ENCODE measurements at regions of chr5 and their contacts with region 1.

Region 1: GRCh38 chr5:91383027-91383955 is at the start of gene ARRDC3:
- DNase-seq: peak; percentile 97 to 98
- H3K4me3 ChIP-seq: peak within 1 kb of the TSS; percentile 65
- H3K4me3 Mint-ChIP-seq: peak within 1 kb of the TSS; percentile 88
- H3K27ac Mint-ChIP-seq: peak within 1 kb of the TSS; percentile 94
- H3K4me1 ChIP-seq: peaks cover 11% of the 10 kb centered on the region
- H3K4me1 Mint-ChIP-seq: no peaks in the 10 kb centered on the region
- H3K27me3 ChIP-seq: no peaks in the 10 kb centered on the region
- H3K27me3 Mint-ChIP-seq: no peaks in the 10 kb centered on the region
- CTCF ChIP-seq: peak in 1 of 2 experiments; percentile 12
- total RNA-seq, gene ARRDC3: 34.5 and 38.7 TPM in 2 replicates

Region 2: GRCh38 chr5:90866333-90866732 is 517.0 kb before region 1 on chr5:
- CTCF ChIA-PET with region 1: interaction called, 10 read pairs
- POLR2A ChIA-PET with region 1: interaction called, 3 read pairs
- intact Hi-C with region 1: loop called (anchors 1 kb)
- DNase-seq: no peak
- H3K4me3 ChIP-seq: no peak overlapping the region
- H3K4me3 Mint-ChIP-seq: no peak overlapping the region
- H3K27ac Mint-ChIP-seq: no peak overlapping the region
- H3K4me1 ChIP-seq: peaks cover 25% of the 10 kb centered on the region
- H3K4me1 Mint-ChIP-seq: peaks cover 14% of the 10 kb centered on the region
- H3K27me3 ChIP-seq: no peaks in the 10 kb centered on the region
- H3K27me3 Mint-ChIP-seq: no peaks in the 10 kb centered on the region
- CTCF ChIP-seq: peak; percentile 34 to 42

Region 3: DNA sequence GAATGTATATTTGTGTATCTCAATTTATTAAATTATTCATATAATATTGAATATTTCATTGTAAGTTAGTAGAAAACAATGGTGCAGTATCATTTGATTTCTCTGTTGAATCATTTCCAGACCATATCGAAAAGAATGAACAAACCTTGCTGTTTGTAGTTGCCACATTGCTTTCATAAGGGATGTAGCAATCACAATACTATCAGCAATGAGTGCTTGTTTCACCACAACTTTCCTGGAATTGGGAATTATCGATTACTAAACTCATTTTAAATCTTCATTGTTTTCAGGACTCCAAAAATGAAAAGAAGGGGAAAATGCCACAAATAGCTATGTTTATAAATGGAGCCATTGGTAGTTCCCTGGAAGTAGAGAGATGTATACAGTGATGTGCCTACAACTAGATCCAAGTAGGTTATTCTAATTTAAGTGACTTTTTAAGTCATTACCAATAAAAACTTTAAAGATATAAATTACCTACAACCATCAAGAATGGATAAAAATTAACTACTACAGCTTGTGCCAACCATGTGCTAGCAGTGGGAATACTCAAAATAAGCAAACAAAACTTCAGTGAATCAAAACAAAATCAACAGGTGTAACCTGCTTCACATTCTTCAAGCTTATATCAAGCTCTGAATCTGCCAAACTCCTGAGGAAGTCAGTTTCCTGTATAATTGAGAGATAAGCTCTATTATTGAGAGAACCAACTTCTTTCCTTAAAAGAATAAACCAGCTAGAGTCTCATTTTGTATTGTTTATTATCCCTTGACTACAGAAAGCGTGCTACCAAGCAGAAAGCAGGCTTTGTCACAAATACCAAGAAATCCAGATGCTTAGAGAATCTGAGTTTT is 466.1 kb before region 1 on chr5:
- CTCF ChIA-PET with region 1: no interaction called
- POLR2A ChIA-PET with region 1: no interaction called
- intact Hi-C with region 1: no loop called
- DNase-seq: no peak
- H3K4me3 ChIP-seq: no peak overlapping the region
- H3K4me3 Mint-ChIP-seq: no peak overlapping the region
- H3K27ac Mint-ChIP-seq: no peak overlapping the region
- H3K4me1 ChIP-seq: no peaks in the 10 kb centered on the region
- H3K4me1 Mint-ChIP-seq: peaks cover 5% of the 10 kb centered on the region
- H3K27me3 ChIP-seq: no peaks in the 10 kb centered on the region
- H3K27me3 Mint-ChIP-seq: no peaks in the 10 kb centered on the region
- CTCF ChIP-seq: no peak

Region 4: DNA sequence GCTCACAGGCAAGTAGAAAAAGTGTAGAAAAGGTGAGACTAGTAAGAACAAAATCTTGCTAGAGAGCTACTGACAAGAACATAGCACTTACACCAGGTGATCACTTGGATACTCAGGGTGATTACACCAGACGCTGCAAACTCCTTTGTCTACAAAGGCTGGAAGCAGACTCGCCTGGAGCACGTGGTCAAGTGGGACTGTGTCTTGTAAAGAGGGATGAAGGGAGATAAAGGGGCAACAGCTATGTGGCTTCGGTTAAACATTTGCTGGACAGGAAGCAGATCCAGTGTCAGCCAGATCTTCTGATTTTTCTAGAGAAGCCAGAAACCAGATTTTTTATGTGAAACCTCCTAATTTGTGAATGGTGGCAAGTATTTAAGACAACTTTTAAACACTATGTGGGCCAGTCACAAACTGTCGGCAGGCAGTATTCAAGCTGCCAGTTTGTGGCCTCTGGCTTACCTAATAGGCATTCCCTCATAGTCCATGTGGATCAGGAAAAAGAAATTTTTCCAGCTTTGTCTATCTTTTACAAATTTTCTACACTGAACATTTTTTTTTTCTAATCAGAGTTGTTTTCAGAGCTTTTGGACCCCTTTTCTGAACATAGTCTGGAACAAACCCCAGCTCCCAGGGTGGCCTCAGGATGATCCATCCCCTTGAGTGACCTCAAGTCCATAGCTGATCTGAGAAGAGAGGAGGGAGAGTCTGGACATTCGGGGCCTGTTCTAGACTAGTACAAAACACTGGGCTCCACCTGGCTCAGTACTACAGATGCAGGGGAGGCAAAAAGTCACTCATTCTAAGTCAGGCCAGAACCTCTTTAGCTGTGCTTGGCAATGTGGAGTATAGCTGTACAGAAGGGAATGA is 263.1 kb before region 1 on chr5:
- CTCF ChIA-PET with region 1: no interaction called
- POLR2A ChIA-PET with region 1: interaction called, 10 read pairs
- intact Hi-C with region 1: no loop called
- DNase-seq: peak in 1 of 2 experiments; percentile 22
- H3K4me3 ChIP-seq: no peak overlapping the region
- H3K4me3 Mint-ChIP-seq: no peak overlapping the region
- H3K27ac Mint-ChIP-seq: peak overlapping the region; percentile 53
- H3K4me1 ChIP-seq: peaks cover 10% of the 10 kb centered on the region
- H3K4me1 Mint-ChIP-seq: peaks cover 20% of the 10 kb centered on the region
- H3K27me3 ChIP-seq: no peaks in the 10 kb centered on the region
- H3K27me3 Mint-ChIP-seq: no peaks in the 10 kb centered on the region
- CTCF ChIP-seq: no peak

Region 5: GRCh38 chr5:91225848-91226686 is 157.2 kb before region 1 on chr5:
- CTCF ChIA-PET with region 1: interaction called, 13 read pairs
- POLR2A ChIA-PET with region 1: interaction called, 40 read pairs
- intact Hi-C with region 1: loop called (anchors 1 kb)
- DNase-seq: peak; percentile 61 to 72
- H3K4me3 ChIP-seq: no peak overlapping the region
- H3K4me3 Mint-ChIP-seq: no peak overlapping the region
- H3K27ac Mint-ChIP-seq: no peak overlapping the region
- H3K4me1 ChIP-seq: peaks cover 10% of the 10 kb centered on the region
- H3K4me1 Mint-ChIP-seq: peaks cover 9% of the 10 kb centered on the region
- H3K27me3 ChIP-seq: no peaks in the 10 kb centered on the region
- H3K27me3 Mint-ChIP-seq: no peaks in the 10 kb centered on the region
- CTCF ChIP-seq: peak; percentile 56 to 64

Region 6: DNA sequence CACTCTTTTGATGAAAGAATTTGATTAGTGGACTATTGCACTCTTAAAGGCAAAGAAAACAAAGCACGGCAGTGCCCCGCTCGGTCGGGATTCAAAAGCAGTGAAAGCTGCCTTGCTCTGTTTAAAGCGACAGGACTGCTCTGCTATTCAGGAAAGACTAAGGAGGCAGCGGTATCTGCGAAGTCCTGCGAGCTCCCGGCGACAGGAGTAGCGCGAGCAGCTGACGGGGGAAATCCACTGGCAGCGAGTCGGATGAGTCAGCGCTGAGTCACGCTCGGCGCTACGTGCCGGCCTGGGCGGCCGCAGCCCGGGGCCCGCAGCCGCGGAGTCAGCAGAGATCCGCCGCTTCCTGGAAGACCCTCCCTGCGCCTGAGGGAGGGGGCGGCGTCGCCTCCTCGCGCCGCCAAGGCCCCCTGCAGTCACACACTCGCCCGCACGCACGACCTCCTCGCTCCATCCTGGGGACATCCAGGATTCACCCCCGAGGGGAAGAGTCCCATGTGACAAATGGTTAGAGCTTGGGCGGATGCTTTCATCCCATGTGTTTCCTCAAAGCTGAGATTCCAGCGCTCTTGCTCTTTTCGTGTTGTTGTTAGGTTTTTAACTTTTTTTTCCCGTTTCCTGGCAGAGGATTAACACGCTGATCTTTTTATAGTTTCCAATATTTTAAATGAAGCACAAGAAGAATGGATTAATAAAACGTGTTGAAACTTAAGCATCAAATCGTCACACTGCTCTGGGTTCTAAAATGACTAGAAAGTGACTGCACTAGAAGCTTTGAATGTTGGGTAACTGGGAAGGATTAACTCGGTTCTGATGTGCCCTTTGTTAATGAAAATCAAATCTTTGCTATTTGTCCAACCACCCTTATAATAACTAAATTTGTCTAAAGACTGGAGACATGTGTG is 102.7 kb before region 1 on chr5:
- CTCF ChIA-PET with region 1: interaction called, 9 read pairs
- POLR2A ChIA-PET with region 1: interaction called, 13 read pairs
- intact Hi-C with region 1: loop called (anchors 1 kb)
- DNase-seq: peak; percentile 89 to 91
- H3K4me3 ChIP-seq: peak overlapping the region; percentile 48
- H3K4me3 Mint-ChIP-seq: peak overlapping the region; percentile 88
- H3K27ac Mint-ChIP-seq: peak overlapping the region; percentile 79
- H3K4me1 ChIP-seq: peaks cover 13% of the 10 kb centered on the region; the same call in 1 of the 2 replicates
- H3K4me1 Mint-ChIP-seq: peaks cover 8% of the 10 kb centered on the region
- H3K27me3 ChIP-seq: no peaks in the 10 kb centered on the region
- H3K27me3 Mint-ChIP-seq: no peaks in the 10 kb centered on the region
- CTCF ChIP-seq: no peak

Region 7: DNA sequence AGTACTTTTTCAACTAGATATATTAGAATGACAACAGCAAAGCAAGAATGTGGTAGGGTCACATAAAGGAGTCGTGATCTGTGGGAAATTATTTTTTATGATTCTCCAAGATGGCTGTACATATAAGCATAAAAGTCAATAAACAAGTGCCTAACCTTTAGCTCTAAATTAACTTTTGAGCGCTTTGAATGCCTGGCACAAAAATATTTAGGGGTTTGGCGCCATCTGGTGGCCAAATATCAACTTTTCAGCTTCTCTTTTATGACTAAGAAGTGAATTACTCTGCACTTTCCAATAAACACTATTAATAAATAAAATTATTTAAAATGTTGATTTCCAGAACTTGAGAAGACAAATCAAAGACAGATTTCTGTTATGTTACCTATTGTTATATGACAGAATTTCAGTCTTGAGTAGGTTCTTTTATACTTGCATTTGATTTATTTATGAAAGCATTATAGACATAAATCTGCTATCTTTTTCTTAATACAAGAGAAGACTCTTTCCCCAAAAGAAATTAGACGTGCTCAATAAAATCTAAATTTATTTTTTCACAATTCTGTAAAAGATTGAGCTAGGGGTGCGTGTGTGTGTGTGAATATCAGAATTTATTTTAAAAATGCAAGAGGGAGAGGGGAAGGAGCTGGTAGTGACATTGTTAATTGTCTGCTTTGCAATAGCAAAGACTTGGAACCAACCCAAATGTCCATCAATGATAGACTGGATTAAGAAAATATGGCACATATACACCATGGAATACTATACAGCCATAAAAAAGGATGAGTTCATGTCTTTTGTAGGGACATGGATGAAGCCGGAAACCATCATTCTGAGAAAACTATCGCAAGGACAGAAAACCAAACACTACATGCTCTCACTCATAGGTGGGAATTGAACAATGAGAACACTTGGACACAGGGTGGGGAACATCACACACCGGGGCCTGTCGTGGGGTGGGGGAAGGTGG is 36.6 kb after region 1 on chr5:
- CTCF ChIA-PET with region 1: interaction called, 19 read pairs
- POLR2A ChIA-PET with region 1: interaction called, 5 read pairs
- intact Hi-C with region 1: loop called (anchors 1 kb)
- DNase-seq: peak; percentile 43 to 54
- H3K4me3 ChIP-seq: no peak overlapping the region
- H3K4me3 Mint-ChIP-seq: no peak overlapping the region
- H3K27ac Mint-ChIP-seq: no peak overlapping the region
- H3K4me1 ChIP-seq: no peaks in the 10 kb centered on the region
- H3K4me1 Mint-ChIP-seq: peaks cover 7% of the 10 kb centered on the region
- H3K27me3 ChIP-seq: no peaks in the 10 kb centered on the region
- H3K27me3 Mint-ChIP-seq: no peaks in the 10 kb centered on the region
- CTCF ChIP-seq: peak; percentile 58 to 76

Region 8: DNA sequence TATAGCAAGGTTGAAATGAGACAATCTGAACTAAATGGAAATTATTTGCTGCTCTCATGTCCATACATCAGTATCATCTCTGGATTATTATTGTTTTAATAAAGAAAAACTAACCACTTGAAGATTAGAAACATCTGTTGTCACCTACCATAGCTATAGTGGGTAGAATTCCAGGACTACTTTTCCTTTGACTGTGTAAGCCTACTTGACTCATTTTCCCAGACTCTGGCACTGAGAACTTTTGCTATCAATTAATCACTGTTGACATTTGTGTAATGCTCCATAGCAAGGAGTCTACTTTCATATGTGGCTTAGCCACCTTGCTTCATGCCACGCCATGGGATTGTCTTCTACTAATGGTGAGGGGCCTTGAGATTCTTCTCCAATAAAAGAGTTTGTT is 59.7 kb after region 1 on chr5:
- CTCF ChIA-PET with region 1: no interaction called
- POLR2A ChIA-PET with region 1: no interaction called
- intact Hi-C with region 1: no loop called
- DNase-seq: no peak
- H3K4me3 ChIP-seq: no peak overlapping the region
- H3K4me3 Mint-ChIP-seq: no peak overlapping the region
- H3K27ac Mint-ChIP-seq: no peak overlapping the region
- H3K4me1 ChIP-seq: no peaks in the 10 kb centered on the region
- H3K4me1 Mint-ChIP-seq: no peaks in the 10 kb centered on the region
- H3K27me3 ChIP-seq: no peaks in the 10 kb centered on the region
- H3K27me3 Mint-ChIP-seq: no peaks in the 10 kb centered on the region
- CTCF ChIP-seq: no peak

Measured in Caco-2 (cell line).